CD8-positive, alpha-beta memory T cell (primary cell): ENCODE measurements at regions of chr18 and their contacts with region 1.

Region 1: DNA sequence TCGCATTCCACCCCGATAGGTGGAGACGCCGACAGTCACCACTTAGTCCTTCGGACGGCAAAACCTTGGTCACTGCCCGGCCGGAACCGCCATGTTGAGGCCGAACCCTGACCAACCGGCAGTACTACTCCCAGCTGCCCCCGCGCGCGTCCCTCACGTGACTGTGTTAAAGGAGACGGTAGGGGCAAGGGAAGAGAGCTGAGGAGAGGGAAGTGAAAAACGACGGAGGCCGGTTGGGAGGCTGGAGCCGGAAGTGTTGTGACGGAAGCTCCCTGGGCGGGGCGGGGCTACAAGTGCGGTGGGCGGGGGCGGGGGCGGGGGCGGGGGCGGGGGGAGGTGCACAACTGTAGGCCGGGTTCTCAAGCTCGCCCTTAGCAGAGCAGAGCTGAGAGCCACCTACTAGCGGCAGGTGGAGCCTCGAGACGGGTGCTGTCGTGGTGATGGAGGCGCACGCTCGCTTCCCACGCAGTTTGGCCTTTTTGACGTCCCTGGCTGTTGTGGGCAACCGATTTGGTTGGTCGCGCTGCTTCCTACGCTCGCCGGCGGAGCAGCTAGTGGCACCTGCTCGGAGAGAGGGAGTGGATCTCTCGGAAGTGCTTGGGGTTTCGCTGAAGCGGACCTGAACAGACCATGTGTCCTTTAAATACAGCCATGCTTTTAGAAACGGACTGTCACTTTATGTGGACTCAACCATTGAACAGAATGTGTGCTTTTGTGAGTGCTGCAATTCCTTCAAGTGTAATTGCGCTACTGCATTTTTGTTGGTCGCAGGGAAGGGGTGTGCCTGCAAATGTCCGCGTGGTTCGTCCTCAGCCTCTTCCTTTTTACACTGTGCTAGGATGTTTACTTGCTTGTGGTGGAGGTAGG is at the start of gene TRAPPC8:
- DNase-seq: peak; percentile 86 to 95 (median 93)
- H3K4me3 ChIP-seq: peak within 1 kb of the TSS; percentile 90
- H3K4me3 Mint-ChIP-seq: peak within 1 kb of the TSS; percentile 97 to 100 (median 99)
- H3K27ac ChIP-seq: peak within 1 kb of the TSS; percentile 95
- H3K27ac Mint-ChIP-seq: peak within 1 kb of the TSS; percentile 95 to 100 (median 100)
- H3K4me1 ChIP-seq: peaks cover 26% of the 10 kb centered on the region
- H3K4me1 Mint-ChIP-seq: peaks cover 45 to 58% (median 56%) of the 10 kb centered on the region in 3 donors
- H3K27me3 ChIP-seq: no peaks in the 10 kb centered on the region
- H3K27me3 Mint-ChIP-seq: no peaks in the 10 kb centered on the region
- total RNA-seq, gene TRAPPC8: 29.2 to 34.8 TPM

Region 2: DNA sequence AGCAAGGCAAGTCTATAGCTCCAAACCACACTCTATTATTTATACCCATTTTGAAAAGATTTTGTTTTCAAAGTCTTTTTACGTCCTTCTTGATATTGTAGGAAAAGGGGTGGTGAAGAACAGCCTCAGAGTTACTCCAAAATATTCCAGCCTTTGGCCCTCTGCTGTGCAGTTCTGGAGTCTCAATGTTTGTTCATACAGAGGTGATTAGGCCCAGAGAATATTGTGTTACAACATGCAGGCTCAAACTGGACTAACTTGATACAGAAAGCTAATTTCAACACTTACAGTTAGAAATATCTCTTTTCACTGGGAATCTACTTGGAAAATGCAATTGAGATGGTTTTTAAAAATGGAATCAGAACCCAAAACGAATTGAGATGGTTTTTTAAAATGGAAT is 142.2 kb before region 1 on chr18:
- CTCF ChIA-PET with region 1: no interaction called
- POLR2A ChIA-PET with region 1: no interaction called
- DNase-seq: no peak
- H3K4me3 ChIP-seq: no peak overlapping the region
- H3K4me3 Mint-ChIP-seq: no peak overlapping the region
- H3K27ac ChIP-seq: no peak overlapping the region
- H3K27ac Mint-ChIP-seq: peak overlapping the region in 1 of 8 donors; percentile 62
- H3K4me1 ChIP-seq: no peaks in the 10 kb centered on the region
- H3K4me1 Mint-ChIP-seq: no peaks in the 10 kb centered on the region
- H3K27me3 ChIP-seq: no peaks in the 10 kb centered on the region
- H3K27me3 Mint-ChIP-seq: peaks cover 2 to 5% of the 10 kb centered on the region in 2 donors

Region 3: GRCh38 chr18:32092422-32093101 is 149.3 kb after region 1 on chr18:
- CTCF ChIA-PET with region 1: interaction called, 8 read pairs
- POLR2A ChIA-PET with region 1: interaction called, 32 read pairs
- DNase-seq: peak; percentile 99 to 100 (median 99)
- H3K4me3 ChIP-seq: peak overlapping the region; percentile 86
- H3K4me3 Mint-ChIP-seq: peak overlapping the region; percentile 93 to 100 (median 97)
- H3K27ac ChIP-seq: peak overlapping the region; percentile 93
- H3K27ac Mint-ChIP-seq: peak overlapping the region; percentile 90 to 99 (median 98)
- H3K4me1 ChIP-seq: peaks cover 41% of the 10 kb centered on the region
- H3K4me1 Mint-ChIP-seq: peaks cover 47 to 57% (median 53%) of the 10 kb centered on the region in 3 donors
- H3K27me3 ChIP-seq: no peaks in the 10 kb centered on the region
- H3K27me3 Mint-ChIP-seq: peaks cover 0 to 2% of the 10 kb centered on the region in 2 donors